ENCODE measurements at regions of chr6 and their contacts with region 1.

Region 1: DNA sequence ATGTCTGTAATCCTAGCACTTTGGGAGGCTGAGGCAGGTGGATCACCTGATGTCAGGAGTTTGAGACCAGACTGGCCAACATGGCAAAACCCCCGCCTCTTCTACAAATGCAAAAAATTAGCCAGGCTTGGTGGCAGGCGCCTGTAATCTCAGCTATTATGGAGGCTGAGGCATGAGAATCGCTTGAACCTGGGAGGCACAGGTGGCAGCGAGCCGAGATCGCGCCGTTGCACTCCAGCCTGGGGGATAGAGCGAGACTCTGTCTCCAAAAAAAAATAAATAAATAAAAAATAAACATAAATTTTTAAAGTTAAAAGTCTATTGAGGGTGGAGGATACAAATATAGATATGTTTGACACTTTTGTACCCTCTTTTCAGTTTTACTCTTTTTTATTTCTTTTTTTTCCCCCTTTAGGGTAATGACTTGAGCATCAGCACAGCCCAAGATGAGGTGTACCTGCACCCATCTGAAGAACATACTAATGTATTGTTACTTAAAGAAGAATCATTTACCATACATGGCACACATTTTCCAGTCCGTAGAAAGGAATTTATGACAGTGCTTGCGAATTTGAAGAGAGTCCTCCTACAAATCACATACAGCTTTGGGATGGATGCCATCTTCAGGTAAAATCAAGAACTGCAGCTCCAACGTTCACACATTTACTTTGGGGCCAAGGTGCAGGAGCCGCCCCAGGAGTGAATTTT is 368.9 kb downstream of the LAMA2 start:
- DNase-seq: peak; percentile 57
- ATAC-seq: peak; percentile 51
- H3K4me3 ChIP-seq: no peak overlapping the region
- H3K4me3 Mint-ChIP-seq: no peak overlapping the region
- H3K27ac ChIP-seq: no peak overlapping the region
- H3K27ac Mint-ChIP-seq: no peak overlapping the region
- H3K4me1 ChIP-seq: no peaks in the 10 kb centered on the region
- H3K4me1 Mint-ChIP-seq: peaks cover 4% of the 10 kb centered on the region
- H3K27me3 ChIP-seq: no peaks in the 10 kb centered on the region
- H3K27me3 Mint-ChIP-seq: peaks cover 16% of the 10 kb centered on the region
- CTCF ChIP-seq: peak; percentile 92

Region 2: DNA sequence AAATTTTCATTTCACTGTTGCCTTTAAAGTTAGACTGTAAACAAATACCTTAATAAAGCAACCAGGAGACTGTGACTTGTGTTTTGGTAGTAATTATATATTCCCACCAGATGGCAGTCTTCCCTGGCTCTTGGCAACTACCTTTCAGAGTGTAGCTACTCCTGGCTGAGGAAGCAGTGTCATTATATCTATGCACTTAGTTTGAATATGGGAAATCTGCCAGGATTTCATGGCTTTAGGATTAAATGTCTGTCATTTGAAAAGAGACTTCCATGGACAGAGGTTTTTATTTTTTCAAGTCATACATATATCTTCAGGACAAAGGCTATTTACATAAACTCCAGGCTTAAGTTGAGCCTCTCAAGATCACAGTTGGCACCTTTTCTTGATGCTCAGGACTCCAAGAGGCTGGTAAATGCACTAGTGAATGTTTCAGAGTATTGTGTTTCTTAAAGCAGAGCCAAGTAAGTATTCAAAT is 1514.8 kb before region 1 on chr6:
- CTCF ChIA-PET with region 1: interaction called, 6 read pairs
- POLR2A ChIA-PET with region 1: no interaction called
- intact Hi-C with region 1: loop called (anchors 2 kb)
- DNase-seq: peak; percentile 54
- ATAC-seq: no peak
- H3K4me3 ChIP-seq: no peak overlapping the region
- H3K4me3 Mint-ChIP-seq: no peak overlapping the region
- H3K27ac ChIP-seq: no peak overlapping the region
- H3K27ac Mint-ChIP-seq: no peak overlapping the region
- H3K4me1 ChIP-seq: no peaks in the 10 kb centered on the region
- H3K4me1 Mint-ChIP-seq: no peaks in the 10 kb centered on the region
- H3K27me3 ChIP-seq: no peaks in the 10 kb centered on the region
- H3K27me3 Mint-ChIP-seq: peaks cover 7% of the 10 kb centered on the region
- CTCF ChIP-seq: peak; percentile 79

Region 3: GRCh38 chr6:128807577-128807976 is 444.2 kb before region 1 on chr6:
- CTCF ChIA-PET with region 1: interaction called, 10 read pairs
- POLR2A ChIA-PET with region 1: no interaction called
- intact Hi-C with region 1: loop called (anchors 5 kb)
- DNase-seq: peak; percentile 3
- ATAC-seq: no peak
- H3K4me3 ChIP-seq: no peak overlapping the region
- H3K4me3 Mint-ChIP-seq: no peak overlapping the region
- H3K27ac ChIP-seq: no peak overlapping the region
- H3K27ac Mint-ChIP-seq: no peak overlapping the region
- H3K4me1 ChIP-seq: no peaks in the 10 kb centered on the region
- H3K4me1 Mint-ChIP-seq: no peaks in the 10 kb centered on the region
- H3K27me3 ChIP-seq: no peaks in the 10 kb centered on the region
- H3K27me3 Mint-ChIP-seq: no peaks in the 10 kb centered on the region
- CTCF ChIP-seq: peak; percentile 20

Region 4: GRCh38 chr6:128981716-128982115 is 270.1 kb before region 1 on chr6:
- CTCF ChIA-PET with region 1: interaction called, 3 read pairs
- POLR2A ChIA-PET with region 1: no interaction called
- intact Hi-C with region 1: loop called (anchors 10 kb)
- DNase-seq: no peak
- ATAC-seq: no peak
- H3K4me3 ChIP-seq: no peak overlapping the region
- H3K4me3 Mint-ChIP-seq: no peak overlapping the region
- H3K27ac ChIP-seq: no peak overlapping the region
- H3K27ac Mint-ChIP-seq: no peak overlapping the region
- H3K4me1 ChIP-seq: no peaks in the 10 kb centered on the region
- H3K4me1 Mint-ChIP-seq: no peaks in the 10 kb centered on the region
- H3K27me3 ChIP-seq: no peaks in the 10 kb centered on the region
- H3K27me3 Mint-ChIP-seq: no peaks in the 10 kb centered on the region
- CTCF ChIP-seq: no peak

Region 5: GRCh38 chr6:129359811-129360681 is 108.2 kb after region 1 on chr6:
- CTCF ChIA-PET with region 1: no interaction called
- POLR2A ChIA-PET with region 1: no interaction called
- intact Hi-C with region 1: loop called (anchors 10 kb)
- DNase-seq: no peak
- ATAC-seq: no peak
- H3K4me3 ChIP-seq: no peak overlapping the region
- H3K4me3 Mint-ChIP-seq: no peak overlapping the region
- H3K27ac ChIP-seq: no peak overlapping the region
- H3K27ac Mint-ChIP-seq: no peak overlapping the region
- H3K4me1 ChIP-seq: no peaks in the 10 kb centered on the region
- H3K4me1 Mint-ChIP-seq: no peaks in the 10 kb centered on the region
- H3K27me3 ChIP-seq: no peaks in the 10 kb centered on the region
- H3K27me3 Mint-ChIP-seq: peaks cover 10% of the 10 kb centered on the region
- CTCF ChIP-seq: no peak